Sigmoid colon (tissue), 7 donors: ENCODE measurements at regions of chr11 and their contacts with region 1.

Region 1: GRCh38 chr11:848380-848931 is 5.8 kb downstream of the TSPAN4 start:
- DNase-seq: no peak
- H3K4me3 ChIP-seq: no peak overlapping the region
- H3K27ac ChIP-seq: no peak overlapping the region
- H3K4me1 ChIP-seq: peaks cover 0 to 69% (median 60%) of the 10 kb centered on the region in 4 donors
- H3K27me3 ChIP-seq: peaks cover 0 to 23% (median 9%) of the 10 kb centered on the region in 3 donors
- CTCF ChIP-seq: peak; percentile 58 to 96 (median 86)
- EP300 ChIP-seq: no peak
- POLR2A ChIP-seq: no peak

Region 2: GRCh38 chr11:729234-730074 is 119.0 kb before region 1 on chr11:
- intact Hi-C with region 1: no loop called
- DNase-seq: no peak
- H3K4me3 ChIP-seq: no peak overlapping the region
- H3K27ac ChIP-seq: no peak overlapping the region
- H3K4me1 ChIP-seq: peaks cover 0 to 30% (median 26%) of the 10 kb centered on the region in 4 donors
- H3K27me3 ChIP-seq: peaks cover 17 to 59% (median 37%) of the 10 kb centered on the region in 3 donors
- CTCF ChIP-seq: no peak
- EP300 ChIP-seq: no peak
- POLR2A ChIP-seq: no peak

Region 3: GRCh38 chr11:910589-911195 is 62.2 kb after region 1 on chr11 and contains the start of gene CHID1:
- intact Hi-C with region 1: loop called (anchors 5 kb)
- DNase-seq: peak; percentile 90
- H3K4me3 ChIP-seq: peak within 1 kb of the TSS; percentile 73 to 93 (median 82)
- H3K27ac ChIP-seq: peak within 1 kb of the TSS; percentile 91 to 96 (median 94)
- H3K4me1 ChIP-seq: peaks cover 0 to 27% (median 18%) of the 10 kb centered on the region in 4 donors
- H3K27me3 ChIP-seq: no peaks in the 10 kb centered on the region
- CTCF ChIP-seq: no peak
- EP300 ChIP-seq: no peak
- POLR2A ChIP-seq: no peak
- total RNA-seq, gene CHID1: 45.7 to 52.3 (median 48.0) TPM

Region 4: GRCh38 chr11:925496-926321 is 77.3 kb after region 1 on chr11 and contains the start of gene AP2A2:
- intact Hi-C with region 1: loop called (anchors 5 kb)
- DNase-seq: peak; percentile 93
- H3K4me3 ChIP-seq: peak within 1 kb of the TSS; percentile 84 to 96 (median 90)
- H3K27ac ChIP-seq: peak within 1 kb of the TSS; percentile 94 to 95 (median 95)
- H3K4me1 ChIP-seq: peaks cover 0 to 43% (median 25%) of the 10 kb centered on the region in 4 donors
- H3K27me3 ChIP-seq: no peaks in the 10 kb centered on the region
- CTCF ChIP-seq: peak; percentile 29 to 74 (median 62)
- EP300 ChIP-seq: no peak
- POLR2A ChIP-seq: no peak
- total RNA-seq, gene AP2A2: 42.6 to 78.4 (median 53.1) TPM

Region 5: GRCh38 chr11:1050581-1051355 is 202.3 kb after region 1 on chr11:
- intact Hi-C with region 1: loop called (anchors 2 kb)
- DNase-seq: peak; percentile 76
- H3K4me3 ChIP-seq: no peak overlapping the region
- H3K27ac ChIP-seq: no peak overlapping the region
- H3K4me1 ChIP-seq: no peaks in the 10 kb centered on the region
- H3K27me3 ChIP-seq: peaks cover 22 to 85% (median 61%) of the 10 kb centered on the region in 3 donors
- CTCF ChIP-seq: peak; percentile 41 to 81 (median 73)
- EP300 ChIP-seq: no peak
- POLR2A ChIP-seq: no peak

Region 6: DNA sequence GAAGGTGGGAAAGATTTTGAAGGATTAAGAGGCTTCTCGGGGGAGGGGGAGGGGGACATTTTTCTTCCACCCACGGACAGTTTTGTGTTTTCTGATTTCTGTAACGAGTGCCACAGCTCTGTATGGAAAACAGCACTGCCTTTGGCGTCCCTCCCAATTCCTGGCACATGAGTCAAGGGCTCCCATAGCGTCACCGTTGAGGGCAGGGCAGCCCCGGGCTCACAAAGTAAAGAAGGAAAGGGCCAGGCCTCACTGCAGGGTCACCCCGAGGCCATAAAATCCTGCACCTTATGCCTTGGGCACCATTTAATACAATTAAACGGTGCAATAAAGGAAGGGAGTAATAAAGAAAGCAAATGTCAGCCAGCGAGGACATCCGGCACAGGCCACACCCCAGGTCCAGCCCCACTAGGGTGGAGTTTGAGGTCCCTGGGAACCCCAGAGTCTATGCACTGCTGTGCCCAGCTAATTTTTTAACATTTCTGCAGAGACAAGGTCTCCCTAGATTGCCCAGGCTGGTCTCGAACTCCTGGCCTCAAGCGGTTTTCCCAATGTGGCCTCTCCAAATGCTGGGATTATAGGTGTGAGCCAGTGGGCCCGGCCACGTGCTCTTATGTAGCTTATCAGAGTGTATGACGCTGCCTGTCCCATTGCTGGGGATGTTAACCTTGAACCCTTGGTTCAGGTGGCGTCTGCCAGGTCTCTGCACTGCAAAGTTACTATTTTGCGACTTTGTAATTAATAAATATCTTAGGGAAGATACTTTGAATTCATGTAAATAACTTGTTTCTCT is 212.6 kb after region 1 on chr11:
- intact Hi-C with region 1: no loop called
- DNase-seq: no peak
- H3K4me3 ChIP-seq: no peak overlapping the region
- H3K27ac ChIP-seq: no peak overlapping the region
- H3K4me1 ChIP-seq: no peaks in the 10 kb centered on the region
- H3K27me3 ChIP-seq: peaks cover 0 to 11% (median 0%) of the 10 kb centered on the region in 3 donors
- CTCF ChIP-seq: no peak
- EP300 ChIP-seq: no peak
- POLR2A ChIP-seq: no peak